ENCODE measurements at regions of chr17 and their contacts with region 1.

Region 1: DNA sequence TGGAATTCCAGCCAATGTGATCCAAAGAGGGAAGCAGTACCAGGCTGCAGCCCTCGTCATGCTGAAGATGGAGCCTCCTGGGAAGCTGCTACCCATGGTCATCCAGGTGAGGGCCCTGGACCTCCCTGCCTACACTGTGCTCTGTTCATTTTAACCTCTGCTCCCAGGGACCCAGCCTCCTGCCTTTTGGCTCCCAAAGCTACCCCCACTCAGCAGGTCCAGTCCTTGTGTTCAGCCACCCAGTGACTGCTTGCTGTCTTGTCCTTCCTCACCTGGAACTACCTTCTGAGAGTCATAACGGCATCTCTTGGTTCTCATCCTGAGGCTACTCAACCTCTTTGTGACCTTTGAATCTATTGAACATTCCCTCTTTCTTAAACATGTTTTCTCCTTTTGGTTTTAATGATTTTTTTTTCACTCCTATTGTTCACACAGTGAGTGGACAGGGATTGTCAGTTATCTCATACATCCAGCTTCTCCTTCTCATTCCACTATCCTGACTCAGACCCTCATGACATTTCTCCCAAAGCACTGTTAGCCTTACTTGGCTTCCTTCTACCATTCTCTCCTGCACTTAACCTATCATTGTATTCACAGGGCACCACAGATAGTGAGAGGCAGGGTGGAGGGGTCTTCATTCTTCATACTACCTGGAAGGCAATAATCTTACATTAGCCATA is 53.3 kb downstream of the GOSR1 start:
- DNase-seq: no peak
- H3K4me3 ChIP-seq: no peak overlapping the region
- H3K27ac ChIP-seq: no peak overlapping the region
- H3K4me1 ChIP-seq: no peaks in the 10 kb centered on the region
- H3K27me3 ChIP-seq: no peaks in the 10 kb centered on the region
- CTCF ChIP-seq: no peak

Region 2: GRCh38 chr17:30576326-30576861 is 45.9 kb after region 1 on chr17:
- CTCF ChIA-PET with region 1: no interaction called
- dilution Hi-C with region 1: loop called (anchors 5 kb)
- in situ Hi-C with region 1: no loop called
- intact Hi-C with region 1: no loop called
- DNase-seq: no peak
- H3K4me3 ChIP-seq: no peak overlapping the region
- H3K27ac ChIP-seq: no peak overlapping the region
- H3K4me1 ChIP-seq: no peaks in the 10 kb centered on the region
- H3K27me3 ChIP-seq: no peaks in the 10 kb centered on the region
- CTCF ChIP-seq: no peak

Measured in mammary epithelial cell (primary cell).